ENCODE measurements at regions of chr1 and their contacts with region 1.

Region 1: GRCh38 chr1:93846211-93846991 is 32.6 kb downstream of the DNTTIP2 start:
- DNase-seq: peak; percentile 87
- ATAC-seq: peak; percentile 26
- H3K4me3 Mint-ChIP-seq: peak overlapping the region; percentile 90
- H3K27ac Mint-ChIP-seq: peak overlapping the region; percentile 88
- H3K4me1 Mint-ChIP-seq: peaks cover 20% of the 10 kb centered on the region
- H3K27me3 Mint-ChIP-seq: no peaks in the 10 kb centered on the region

Region 2: DNA sequence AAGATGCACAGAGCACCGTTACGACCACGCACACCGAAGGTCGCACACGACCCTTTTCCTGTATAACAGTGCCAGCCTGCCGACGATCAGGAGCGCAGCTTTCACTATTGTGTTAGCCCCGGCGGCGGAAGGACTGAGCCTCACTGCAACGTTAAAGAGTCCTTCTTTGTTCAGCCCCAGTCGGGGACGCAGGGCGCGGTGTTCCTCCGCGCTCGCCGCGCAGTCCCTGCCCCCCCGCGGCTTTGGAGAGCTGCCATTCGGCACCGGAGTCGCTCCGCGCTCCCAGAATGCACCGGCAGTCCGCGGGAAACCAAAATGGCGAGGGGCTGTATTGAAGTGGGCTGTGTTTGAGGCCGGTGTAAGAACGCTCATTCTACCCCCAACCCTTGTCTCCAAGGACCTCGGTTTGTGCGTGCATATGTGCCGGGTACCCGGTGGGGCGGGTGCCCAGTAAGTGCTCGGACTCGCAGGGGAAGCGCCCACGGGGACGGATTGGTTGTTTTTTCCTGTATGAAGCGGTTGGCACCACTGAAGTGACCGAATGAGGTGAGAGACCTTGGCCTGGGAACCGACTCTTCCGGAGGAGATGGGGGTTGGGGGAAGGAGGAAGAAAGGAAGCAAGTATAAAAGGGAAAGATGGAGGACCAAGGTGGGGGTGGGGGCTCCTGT is 767.3 kb before region 1 on chr1 and contains the start of gene MTF2:
- CTCF ChIA-PET with region 1: no interaction called
- POLR2A ChIA-PET with region 1: no interaction called
- intact Hi-C with region 1: loop called in 1 of 2 experiments (anchors 2 kb)
- DNase-seq: peak; percentile 97
- ATAC-seq: peak; percentile 91
- H3K4me3 Mint-ChIP-seq: peak within 1 kb of the TSS; percentile 94
- H3K27ac Mint-ChIP-seq: peak within 1 kb of the TSS; percentile 94
- H3K4me1 Mint-ChIP-seq: peaks cover 29% of the 10 kb centered on the region
- H3K27me3 Mint-ChIP-seq: no peaks in the 10 kb centered on the region
- total RNA-seq, gene MTF2: 49.8 to 55.0 TPM

Region 3: GRCh38 chr1:93437976-93438605 is 408.3 kb before region 1 on chr1:
- CTCF ChIA-PET with region 1: interaction called, 7 read pairs
- POLR2A ChIA-PET with region 1: no interaction called
- intact Hi-C with region 1: loop called (anchors 1 to 2 kb)
- DNase-seq: no peak
- ATAC-seq: no peak
- H3K4me3 Mint-ChIP-seq: no peak overlapping the region
- H3K27ac Mint-ChIP-seq: no peak overlapping the region
- H3K4me1 Mint-ChIP-seq: no peaks in the 10 kb centered on the region
- H3K27me3 Mint-ChIP-seq: peaks cover 2% of the 10 kb centered on the region

Region 4: DNA sequence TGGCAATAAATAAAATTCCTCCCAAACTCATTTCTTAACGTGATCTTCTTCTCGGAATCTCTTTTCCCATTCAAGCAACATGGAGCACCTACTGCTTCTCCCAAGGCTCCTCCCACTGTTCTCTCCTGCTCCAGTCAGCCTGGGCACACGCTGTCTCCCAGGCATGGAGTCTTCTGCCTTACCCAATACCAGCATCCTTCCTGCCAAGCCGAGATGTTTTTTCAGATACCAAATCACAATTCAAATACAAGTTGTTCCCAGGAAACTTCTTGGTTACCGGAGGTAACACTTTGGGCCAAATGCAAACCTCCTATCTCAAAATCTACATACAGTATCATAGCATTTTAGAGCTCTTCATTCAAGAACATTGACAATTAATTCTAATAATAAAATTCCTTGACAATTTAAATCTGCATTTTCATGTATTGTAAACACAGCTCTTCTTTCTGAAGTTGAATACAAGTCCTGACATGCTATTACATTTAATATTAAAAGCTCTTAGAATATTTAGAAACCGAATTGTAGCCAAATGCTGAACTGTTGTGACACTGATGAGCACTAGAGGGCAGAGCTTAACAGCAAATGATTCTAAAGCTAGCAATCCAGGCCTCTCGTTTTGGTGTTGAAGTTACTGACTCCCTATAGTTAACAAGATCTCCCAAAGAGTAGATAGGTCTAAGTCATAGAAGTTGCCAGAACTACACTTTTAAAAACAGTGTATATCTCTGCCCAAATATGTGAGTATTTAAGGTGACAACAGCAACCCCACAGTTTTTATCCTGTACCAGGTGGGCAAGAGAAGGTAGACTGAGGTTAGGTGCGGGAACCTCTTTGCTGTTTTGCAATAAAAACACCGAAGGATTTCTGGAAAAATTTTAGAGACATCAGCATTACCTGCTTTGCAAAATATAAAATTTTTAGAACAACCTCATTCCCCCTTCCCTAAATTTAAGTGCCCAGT is 217.0 kb before region 1 on chr1:
- CTCF ChIA-PET with region 1: interaction called, 107 read pairs
- POLR2A ChIA-PET with region 1: no interaction called
- intact Hi-C with region 1: loop called (anchors 1 kb)
- DNase-seq: peak; percentile 56
- ATAC-seq: peak; percentile 78
- H3K4me3 Mint-ChIP-seq: no peak overlapping the region
- H3K27ac Mint-ChIP-seq: no peak overlapping the region
- H3K4me1 Mint-ChIP-seq: no peaks in the 10 kb centered on the region
- H3K27me3 Mint-ChIP-seq: no peaks in the 10 kb centered on the region

Region 5: DNA sequence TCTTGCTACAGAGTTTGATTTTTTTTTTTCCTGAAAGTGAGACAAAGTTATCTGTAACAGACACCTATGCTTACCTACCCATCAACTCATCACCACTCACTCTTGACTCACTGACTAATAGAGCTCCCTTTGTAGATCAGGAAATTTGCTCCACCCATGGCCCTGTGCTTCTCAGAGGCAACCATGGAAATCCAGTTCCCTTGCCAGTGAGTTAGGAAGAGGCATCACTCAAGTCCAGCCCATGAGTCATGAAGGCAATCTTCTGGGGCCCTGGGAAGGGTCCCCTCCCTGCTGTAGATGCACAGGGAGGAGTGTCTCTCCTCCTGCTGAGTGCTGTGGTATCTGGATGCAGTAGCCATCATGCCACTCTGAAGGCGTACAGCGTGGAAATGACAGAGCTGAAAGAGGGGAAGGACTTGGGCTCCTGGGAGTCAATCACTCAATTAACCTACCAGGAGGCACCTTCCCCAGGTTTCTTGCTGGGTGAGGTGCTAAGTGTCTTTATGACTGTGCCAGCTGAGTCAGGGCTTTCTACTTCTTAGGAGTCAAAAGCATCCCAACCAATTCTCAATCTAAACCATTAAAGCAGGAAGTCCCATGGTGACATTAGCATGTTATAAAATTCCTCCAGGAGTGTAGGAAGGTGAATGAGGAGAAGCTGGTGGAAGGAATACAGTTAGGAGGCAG is 23.5 kb before region 1 on chr1:
- CTCF ChIA-PET with region 1: interaction called, 7 read pairs
- POLR2A ChIA-PET with region 1: no interaction called
- intact Hi-C with region 1: loop called (anchors 1 to 2 kb)
- DNase-seq: peak; percentile 58
- ATAC-seq: peak; percentile 73
- H3K4me3 Mint-ChIP-seq: no peak overlapping the region
- H3K27ac Mint-ChIP-seq: no peak overlapping the region
- H3K4me1 Mint-ChIP-seq: peaks cover 16% of the 10 kb centered on the region
- H3K27me3 Mint-ChIP-seq: no peaks in the 10 kb centered on the region

Region 6: DNA sequence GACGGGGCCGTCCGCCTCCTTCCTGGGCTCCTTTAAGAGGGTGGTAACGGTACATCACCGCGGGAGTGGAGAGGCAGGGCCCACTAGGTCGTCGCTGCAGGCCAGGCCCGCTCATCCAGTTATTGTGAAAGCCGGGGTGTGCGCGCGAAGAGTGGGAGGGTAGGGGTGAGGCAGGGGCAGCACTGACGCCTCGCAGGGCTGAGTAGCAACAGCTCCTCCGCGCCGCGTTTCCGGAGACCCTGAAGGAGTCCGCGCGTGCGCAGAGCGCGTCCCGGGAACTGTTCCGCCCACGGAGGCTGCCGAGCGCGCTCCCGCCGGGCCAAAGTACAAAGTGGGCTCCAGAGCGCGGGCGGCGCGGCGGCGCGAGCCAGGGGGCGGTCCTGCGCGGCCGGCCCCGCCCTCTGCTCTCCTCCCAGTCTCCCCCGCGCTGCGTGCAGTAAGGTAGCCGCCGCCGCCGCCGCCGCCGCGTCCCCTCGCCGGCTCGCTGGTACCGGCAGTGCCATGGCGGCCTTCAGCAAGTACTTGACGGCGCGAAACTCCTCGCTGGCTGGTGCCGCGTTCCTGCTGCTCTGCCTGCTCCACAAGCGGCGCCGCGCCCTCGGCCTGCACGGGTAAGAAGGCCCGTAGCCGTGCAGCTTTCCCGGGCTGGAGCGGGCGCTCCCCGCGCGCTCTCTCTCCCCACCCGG is 571.7 kb after region 1 on chr1 and contains the start of gene ABCD3:
- CTCF ChIA-PET with region 1: no interaction called
- POLR2A ChIA-PET with region 1: no interaction called
- intact Hi-C with region 1: loop called (anchors 1 to 2 kb)
- DNase-seq: peak; percentile 98
- ATAC-seq: peak; percentile 91
- H3K4me3 Mint-ChIP-seq: no peak within 1 kb of the TSS
- H3K27ac Mint-ChIP-seq: peak within 1 kb of the TSS; percentile 87
- H3K4me1 Mint-ChIP-seq: peaks cover 29% of the 10 kb centered on the region
- H3K27me3 Mint-ChIP-seq: peaks cover 6% of the 10 kb centered on the region
- total RNA-seq, gene ABCD3: 46.1 to 67.1 TPM

Measured in activated CD4-positive, alpha-beta T cell treated with anti-CD3 and anti-CD28 coated beads for 36 hours (primary cell).